ENCODE measurements at regions of chr6 and their contacts with region 1.

Region 1: GRCh38 chr6:144149891-144150709 is at the start of gene STX11:
- DNase-seq: peak; percentile 64 to 78 (median 68)
- H3K4me3 ChIP-seq: peak within 1 kb of the TSS; percentile 63 to 84
- H3K4me3 Mint-ChIP-seq: peak within 1 kb of the TSS; percentile 95 to 97 (median 96)
- H3K27ac ChIP-seq: peak within 1 kb of the TSS; percentile 80
- H3K27ac Mint-ChIP-seq: peak within 1 kb of the TSS; percentile 85 to 98 (median 96)
- H3K4me1 ChIP-seq: peaks cover 29% of the 10 kb centered on the region
- H3K4me1 Mint-ChIP-seq: peaks cover 24 to 29% (median 27%) of the 10 kb centered on the region in 4 donors
- H3K27me3 ChIP-seq: no peaks in the 10 kb centered on the region
- H3K27me3 Mint-ChIP-seq: no peaks in the 10 kb centered on the region
- total RNA-seq, gene STX11: 5.7 to 6.2 TPM

Region 2: DNA sequence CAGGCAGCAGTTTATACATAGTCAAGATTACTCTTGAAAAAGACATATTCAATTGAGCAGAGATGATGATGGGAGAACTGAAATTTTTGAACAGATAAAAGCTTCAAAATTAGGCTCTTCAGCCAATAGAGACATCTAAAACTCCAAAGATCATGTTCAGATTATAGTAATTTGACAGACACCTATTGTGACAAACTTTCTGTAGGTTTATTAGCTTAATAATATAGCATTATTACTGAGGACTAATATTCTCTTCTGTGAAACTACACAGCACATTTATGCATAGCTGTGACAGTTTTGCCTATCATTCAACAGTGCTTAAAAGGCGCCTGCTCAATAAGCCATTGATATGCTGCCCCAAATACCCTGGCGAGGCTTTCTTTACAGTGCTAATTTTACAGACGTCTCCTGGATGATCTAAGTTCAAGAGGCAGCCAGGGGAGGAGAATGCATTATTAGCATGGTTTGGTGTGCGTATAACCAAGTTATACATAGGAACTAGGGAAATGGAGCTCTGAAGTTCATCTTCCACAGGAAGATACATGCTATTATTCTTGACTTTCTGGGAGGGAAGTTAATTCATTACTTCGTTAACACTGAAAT is 163.5 kb before region 1 on chr6:
- CTCF ChIA-PET with region 1: no interaction called
- POLR2A ChIA-PET with region 1: no interaction called
- intact Hi-C with region 1: no loop called
- DNase-seq: no peak
- H3K4me3 ChIP-seq: no peak overlapping the region
- H3K4me3 Mint-ChIP-seq: no peak overlapping the region
- H3K27ac ChIP-seq: no peak overlapping the region
- H3K27ac Mint-ChIP-seq: no peak overlapping the region
- H3K4me1 ChIP-seq: no peaks in the 10 kb centered on the region
- H3K4me1 Mint-ChIP-seq: no peaks in the 10 kb centered on the region
- H3K27me3 ChIP-seq: no peaks in the 10 kb centered on the region
- H3K27me3 Mint-ChIP-seq: peaks cover 0 to 5% of the 10 kb centered on the region in 2 donors

Region 3: DNA sequence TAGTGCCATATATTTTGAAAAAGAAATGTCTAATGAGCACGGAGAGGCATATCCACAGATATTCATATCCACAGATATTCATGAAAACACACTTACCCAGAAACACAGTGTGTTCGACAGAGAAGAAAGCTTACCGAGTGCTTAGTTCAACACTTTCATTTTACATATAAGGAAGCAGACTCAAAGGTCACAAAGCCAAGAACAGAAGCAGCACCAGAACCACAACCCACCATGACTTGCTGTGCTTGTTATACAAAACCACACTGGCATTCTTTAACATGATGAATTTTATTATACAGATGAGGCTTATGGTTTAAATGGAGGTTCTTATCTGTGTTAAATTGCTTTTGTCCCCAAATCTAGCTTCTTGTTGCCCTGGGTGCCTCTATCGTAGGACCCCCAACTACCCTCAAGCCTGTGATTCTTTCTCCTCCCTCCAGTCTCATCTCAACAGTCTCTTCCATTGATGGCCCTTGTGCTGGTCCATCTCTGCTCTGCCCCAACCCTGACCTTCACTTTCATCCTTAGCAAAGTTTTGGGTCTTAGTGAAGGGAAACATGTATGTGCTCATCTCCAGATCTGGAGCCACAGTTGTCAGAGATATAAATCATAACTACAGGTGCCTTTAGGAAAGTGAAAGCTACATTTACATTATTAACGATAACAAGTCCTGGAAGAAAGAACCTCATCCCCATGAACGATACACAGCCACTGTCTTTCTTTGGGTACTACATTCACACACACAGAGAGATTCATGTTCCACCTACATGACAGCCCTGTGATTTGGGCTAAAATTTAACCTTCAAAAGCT is 94.8 kb before region 1 on chr6:
- CTCF ChIA-PET with region 1: no interaction called
- POLR2A ChIA-PET with region 1: interaction called, 6 read pairs
- intact Hi-C with region 1: loop called (anchors 2 kb)
- DNase-seq: peak; percentile 61 to 77 (median 72)
- H3K4me3 ChIP-seq: peak overlapping the region in 1 of 2 donors; percentile 46
- H3K4me3 Mint-ChIP-seq: peak overlapping the region; percentile 77 to 95 (median 89)
- H3K27ac ChIP-seq: peak overlapping the region; percentile 54
- H3K27ac Mint-ChIP-seq: peak overlapping the region; percentile 79 to 98 (median 96)
- H3K4me1 ChIP-seq: peaks cover 33% of the 10 kb centered on the region
- H3K4me1 Mint-ChIP-seq: peaks cover 28 to 39% (median 33%) of the 10 kb centered on the region in 4 donors
- H3K27me3 ChIP-seq: no peaks in the 10 kb centered on the region
- H3K27me3 Mint-ChIP-seq: no peaks in the 10 kb centered on the region

Region 4: DNA sequence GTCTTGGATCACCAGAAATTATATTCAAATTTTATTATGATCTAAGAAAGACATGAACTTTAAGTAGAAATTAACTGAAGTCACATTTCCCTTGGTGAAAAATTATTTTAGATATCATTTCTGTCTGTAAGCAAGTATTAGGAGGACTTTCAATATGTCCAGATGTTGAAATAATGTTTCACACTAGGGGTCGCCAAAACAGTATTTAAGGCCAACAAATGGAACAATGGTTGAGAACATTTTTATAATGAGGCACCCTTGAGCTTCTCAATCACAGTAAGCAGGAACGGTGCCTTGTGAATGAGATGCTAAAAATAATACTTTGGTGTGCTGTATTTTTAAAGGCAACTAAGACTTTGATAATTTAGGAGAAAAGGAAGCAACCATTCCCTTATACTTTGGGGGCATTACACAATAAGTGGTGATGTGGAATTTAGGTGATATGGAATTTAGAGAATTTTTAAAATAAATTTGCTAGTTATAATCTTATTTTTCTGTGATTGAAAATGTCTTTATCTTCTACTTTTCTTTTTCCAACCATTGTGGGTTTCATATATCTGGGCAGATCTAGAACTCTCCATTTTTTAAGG is 45.1 kb before region 1 on chr6:
- CTCF ChIA-PET with region 1: no interaction called
- POLR2A ChIA-PET with region 1: interaction called, 4 read pairs
- intact Hi-C with region 1: loop called (anchors 2 kb)
- DNase-seq: peak; percentile 45 to 70 (median 67)
- H3K4me3 ChIP-seq: no peak overlapping the region
- H3K4me3 Mint-ChIP-seq: no peak overlapping the region
- H3K27ac ChIP-seq: no peak overlapping the region
- H3K27ac Mint-ChIP-seq: peak overlapping the region in 1 of 7 donors; percentile 84
- H3K4me1 ChIP-seq: no peaks in the 10 kb centered on the region
- H3K4me1 Mint-ChIP-seq: peaks cover 1 to 4% (median 3%) of the 10 kb centered on the region in 4 donors
- H3K27me3 ChIP-seq: no peaks in the 10 kb centered on the region
- H3K27me3 Mint-ChIP-seq: no peaks in the 10 kb centered on the region

Region 5: GRCh38 chr6:144131248-144131709 is 18.8 kb before region 1 on chr6:
- CTCF ChIA-PET with region 1: no interaction called
- POLR2A ChIA-PET with region 1: no interaction called
- intact Hi-C with region 1: no loop called
- DNase-seq: no peak
- H3K4me3 ChIP-seq: no peak overlapping the region
- H3K4me3 Mint-ChIP-seq: peak overlapping the region in 3 of 8 donors; percentile 7 to 74 (median 64)
- H3K27ac ChIP-seq: no peak overlapping the region
- H3K27ac Mint-ChIP-seq: no peak overlapping the region
- H3K4me1 ChIP-seq: peaks cover 9% of the 10 kb centered on the region
- H3K4me1 Mint-ChIP-seq: peaks cover 6 to 16% (median 10%) of the 10 kb centered on the region in 4 donors
- H3K27me3 ChIP-seq: no peaks in the 10 kb centered on the region
- H3K27me3 Mint-ChIP-seq: no peaks in the 10 kb centered on the region

Region 6: DNA sequence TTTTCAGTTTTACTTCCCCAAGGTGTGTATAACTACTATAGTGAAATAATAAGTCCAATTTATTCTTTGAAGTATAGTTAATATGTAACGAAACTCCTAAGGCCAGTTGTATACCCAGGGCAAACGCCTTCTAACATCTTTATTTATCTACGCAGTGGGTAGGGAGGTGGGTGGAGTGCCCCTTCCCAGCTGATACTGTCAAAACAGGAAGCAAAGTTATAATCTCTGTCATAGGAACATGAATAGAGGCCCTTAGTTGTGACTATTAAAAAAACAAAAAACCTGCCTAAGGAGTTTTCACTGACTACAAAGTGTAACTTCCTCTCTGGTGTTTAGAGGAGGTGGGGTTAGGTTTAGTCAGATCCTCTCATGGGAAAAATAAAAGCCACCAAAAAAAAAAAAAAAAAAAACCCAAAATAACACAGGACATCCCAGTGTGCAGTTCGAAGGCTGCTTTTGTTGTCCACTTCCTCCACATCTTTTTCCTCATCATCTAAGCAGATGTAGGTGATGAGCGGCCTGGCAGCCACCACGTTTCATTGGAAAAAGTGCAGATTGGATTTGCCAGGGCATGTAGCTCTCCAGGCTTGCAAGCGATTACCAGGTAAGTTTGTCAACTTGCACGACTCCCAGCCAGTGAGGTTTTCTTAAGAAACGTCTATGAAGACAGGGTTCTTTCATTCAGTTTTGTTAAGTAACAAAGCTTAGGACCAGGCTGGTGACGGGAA is 193.8 kb after region 1 on chr6:
- CTCF ChIA-PET with region 1: no interaction called
- POLR2A ChIA-PET with region 1: interaction called, 4 read pairs
- intact Hi-C with region 1: loop called (anchors 1 kb)
- DNase-seq: peak; percentile 74 to 85 (median 80)
- H3K4me3 ChIP-seq: peak overlapping the region; percentile 68 to 95
- H3K4me3 Mint-ChIP-seq: peak overlapping the region; percentile 87 to 98 (median 92)
- H3K27ac ChIP-seq: peak overlapping the region; percentile 75
- H3K27ac Mint-ChIP-seq: peak overlapping the region; percentile 93 to 99 (median 96)
- H3K4me1 ChIP-seq: peaks cover 65% of the 10 kb centered on the region
- H3K4me1 Mint-ChIP-seq: peaks cover 49 to 85% (median 69%) of the 10 kb centered on the region in 4 donors
- H3K27me3 ChIP-seq: no peaks in the 10 kb centered on the region
- H3K27me3 Mint-ChIP-seq: no peaks in the 10 kb centered on the region

Region 7: DNA sequence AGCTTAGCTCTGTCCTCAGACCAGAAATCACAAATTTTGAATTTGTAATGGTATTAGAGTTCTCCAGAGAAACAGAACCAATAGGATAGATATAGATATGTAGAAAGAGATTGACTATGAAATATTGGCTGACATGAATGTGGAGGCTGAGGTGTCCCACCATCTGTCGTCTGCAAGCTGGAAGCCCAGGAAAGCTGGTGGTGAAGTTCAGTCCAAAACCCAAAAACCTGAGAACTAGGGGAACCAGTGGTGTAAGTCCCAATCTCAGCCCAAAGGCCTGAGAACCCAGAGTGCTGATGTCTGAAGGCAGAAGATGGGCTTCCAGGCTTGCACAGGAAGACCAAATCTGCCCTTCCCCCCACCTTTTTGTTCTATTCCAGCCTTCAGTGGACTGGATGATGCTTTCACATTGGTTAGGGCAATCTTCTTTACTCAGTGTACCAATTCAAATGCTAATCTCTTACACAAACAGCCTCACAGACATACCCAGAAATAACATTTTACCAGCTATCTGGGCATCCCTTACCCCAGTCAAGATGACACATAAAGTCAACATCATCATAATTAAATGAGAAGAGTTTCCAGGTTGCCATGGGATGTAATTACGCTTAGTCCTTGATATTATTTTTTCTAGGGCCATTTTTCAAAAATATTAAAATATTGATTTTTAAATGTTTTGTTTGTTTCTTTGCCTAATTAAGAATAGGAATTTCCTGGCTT is 705.9 kb after region 1 on chr6:
- CTCF ChIA-PET with region 1: no interaction called
- POLR2A ChIA-PET with region 1: no interaction called
- intact Hi-C with region 1: no loop called
- DNase-seq: no peak
- H3K4me3 ChIP-seq: no peak overlapping the region
- H3K4me3 Mint-ChIP-seq: no peak overlapping the region
- H3K27ac ChIP-seq: no peak overlapping the region
- H3K27ac Mint-ChIP-seq: peak overlapping the region in 1 of 7 donors; percentile 23
- H3K4me1 ChIP-seq: no peaks in the 10 kb centered on the region
- H3K4me1 Mint-ChIP-seq: peaks cover 0 to 2% (median 0%) of the 10 kb centered on the region in 4 donors
- H3K27me3 ChIP-seq: no peaks in the 10 kb centered on the region
- H3K27me3 Mint-ChIP-seq: no peaks in the 10 kb centered on the region